GM10248 (cell line): ENCODE measurements at regions of chr9 and their contacts with region 1.

Region 1: DNA sequence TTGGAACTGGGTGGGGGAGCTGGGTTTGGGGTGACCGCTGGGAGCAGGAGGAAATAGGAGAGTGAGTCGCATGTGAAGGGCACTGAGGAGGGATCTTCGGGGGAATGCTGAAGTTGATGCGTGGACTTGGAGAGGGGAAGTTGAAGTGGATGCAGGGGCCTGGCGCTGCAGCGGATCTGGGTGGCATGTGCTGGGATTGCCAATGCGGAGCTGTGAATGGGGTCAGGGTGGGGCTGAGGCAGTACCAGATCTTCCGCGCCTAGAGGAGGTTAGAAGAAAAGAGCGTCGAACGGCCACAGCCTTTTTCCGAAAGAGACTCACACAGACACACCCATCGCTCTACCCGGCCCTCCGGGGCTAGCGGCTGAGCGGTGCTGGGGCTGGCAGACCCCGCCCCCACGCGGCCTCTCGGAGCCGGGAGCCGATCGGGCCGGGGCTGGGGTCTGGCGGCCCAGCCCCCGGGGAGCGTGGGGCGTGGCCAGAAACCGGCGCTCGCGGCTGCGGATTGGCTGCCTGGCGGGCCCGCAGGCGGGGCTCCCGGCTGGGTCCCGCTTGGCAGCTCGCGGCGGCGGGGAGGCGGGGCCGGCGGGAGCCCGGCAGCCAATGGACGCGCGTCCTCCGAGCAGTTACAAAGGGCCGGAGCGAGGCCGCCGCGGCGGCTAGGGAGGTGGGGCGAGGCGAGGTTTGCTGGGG is at the start of gene TGFBR1:
- DNase-seq: peak; percentile 98
- CTCF ChIP-seq: no peak

Region 2: DNA sequence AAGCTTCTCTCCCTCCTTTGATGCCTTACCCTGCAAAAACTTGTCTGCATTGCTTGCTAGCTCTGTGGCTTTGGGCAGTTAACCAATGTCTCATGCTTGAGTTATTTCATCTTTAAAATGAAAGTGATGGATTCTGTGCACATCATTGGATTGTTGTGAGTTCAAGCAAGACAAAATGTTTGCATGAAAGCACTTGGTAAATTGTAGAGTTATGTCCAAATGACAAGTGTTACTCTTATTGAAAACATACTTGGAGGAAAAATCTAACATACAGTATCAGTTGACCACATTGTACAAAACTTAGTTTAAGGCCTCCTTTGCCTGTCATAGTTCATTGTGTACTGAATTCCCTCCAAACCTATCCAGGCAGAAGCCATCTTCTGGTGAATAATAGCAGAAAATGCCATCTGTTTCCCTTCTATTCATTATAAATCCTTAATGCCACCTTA is 30.3 kb after region 1 on chr9:
- CTCF ChIA-PET with region 1: interaction called, 21 read pairs
- POLR2A ChIA-PET with region 1: no interaction called
- DNase-seq: no peak
- CTCF ChIP-seq: no peak